Mammary epithelial cell (primary cell): ENCODE measurements at regions of chr3 and their contacts with region 1.

Region 1: GRCh38 chr3:22685597-22685996 is 517.5 kb upstream of the UBE2E2 start:
- DNase-seq: peak; percentile 34
- H3K4me3 ChIP-seq: no peak overlapping the region
- H3K27ac ChIP-seq: no peak overlapping the region
- H3K4me1 ChIP-seq: no peaks in the 10 kb centered on the region
- H3K27me3 ChIP-seq: no peaks in the 10 kb centered on the region
- CTCF ChIP-seq: peak; percentile 61 to 80

Region 2: DNA sequence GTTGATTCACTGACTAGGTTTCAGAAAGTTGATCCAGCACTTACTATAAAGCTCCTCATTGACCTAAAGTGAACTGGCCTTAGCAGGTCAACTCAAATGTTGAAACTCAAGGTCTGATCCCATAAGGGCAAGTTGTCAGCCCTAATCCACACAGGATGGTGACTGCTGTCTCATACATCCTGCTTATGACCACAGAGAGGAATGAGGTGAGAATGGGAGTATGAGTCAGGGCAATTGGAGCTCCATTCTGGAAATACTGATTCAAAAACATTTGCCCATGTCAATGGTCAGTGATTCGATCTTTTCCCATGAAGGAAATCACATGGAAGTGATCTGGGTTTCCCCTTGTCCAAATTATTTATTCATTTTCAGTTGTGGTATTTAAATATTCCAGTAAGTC is 1013.3 kb before region 1 on chr3:
- CTCF ChIA-PET with region 1: no interaction called
- dilution Hi-C with region 1: no loop called
- in situ Hi-C with region 1: no loop called
- intact Hi-C with region 1: no loop called
- DNase-seq: peak; percentile 94
- H3K4me3 ChIP-seq: no peak overlapping the region
- H3K27ac ChIP-seq: peak overlapping the region; percentile 69
- H3K4me1 ChIP-seq: peaks cover 10% of the 10 kb centered on the region
- H3K27me3 ChIP-seq: no peaks in the 10 kb centered on the region
- CTCF ChIP-seq: no peak

Region 3: DNA sequence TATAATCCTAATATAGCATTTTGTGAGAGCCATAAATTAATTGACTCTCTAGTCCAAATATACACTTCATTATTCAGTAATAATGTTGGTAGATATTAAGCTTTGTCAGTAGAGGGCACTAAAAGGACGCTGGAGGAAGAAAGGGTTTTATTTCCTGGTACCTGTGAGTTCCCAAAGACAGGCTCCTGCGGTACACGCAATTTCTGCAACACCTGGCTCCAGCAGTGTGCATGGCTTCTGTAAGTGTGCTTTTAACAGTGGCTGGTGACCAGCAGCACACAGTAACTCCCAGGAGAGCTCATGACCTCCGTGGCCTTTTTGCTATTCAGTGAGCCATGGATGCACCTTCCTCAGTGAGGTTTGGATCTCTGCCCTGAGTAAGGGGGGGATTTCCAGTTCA is 596.3 kb before region 1 on chr3:
- CTCF ChIA-PET with region 1: no interaction called
- dilution Hi-C with region 1: no loop called
- in situ Hi-C with region 1: no loop called
- intact Hi-C with region 1: loop called (anchors 10 kb)
- DNase-seq: peak; percentile 32
- H3K4me3 ChIP-seq: no peak overlapping the region
- H3K27ac ChIP-seq: no peak overlapping the region
- H3K4me1 ChIP-seq: no peaks in the 10 kb centered on the region
- H3K27me3 ChIP-seq: no peaks in the 10 kb centered on the region
- CTCF ChIP-seq: peak; percentile 58 to 63

Region 4: GRCh38 chr3:22175947-22176346 is 509.6 kb before region 1 on chr3:
- CTCF ChIA-PET with region 1: no interaction called
- dilution Hi-C with region 1: no loop called
- in situ Hi-C with region 1: no loop called
- intact Hi-C with region 1: loop called (anchors 1 kb)
- DNase-seq: no peak
- H3K4me3 ChIP-seq: no peak overlapping the region
- H3K27ac ChIP-seq: no peak overlapping the region
- H3K4me1 ChIP-seq: no peaks in the 10 kb centered on the region
- H3K27me3 ChIP-seq: no peaks in the 10 kb centered on the region
- CTCF ChIP-seq: no peak

Region 5: DNA sequence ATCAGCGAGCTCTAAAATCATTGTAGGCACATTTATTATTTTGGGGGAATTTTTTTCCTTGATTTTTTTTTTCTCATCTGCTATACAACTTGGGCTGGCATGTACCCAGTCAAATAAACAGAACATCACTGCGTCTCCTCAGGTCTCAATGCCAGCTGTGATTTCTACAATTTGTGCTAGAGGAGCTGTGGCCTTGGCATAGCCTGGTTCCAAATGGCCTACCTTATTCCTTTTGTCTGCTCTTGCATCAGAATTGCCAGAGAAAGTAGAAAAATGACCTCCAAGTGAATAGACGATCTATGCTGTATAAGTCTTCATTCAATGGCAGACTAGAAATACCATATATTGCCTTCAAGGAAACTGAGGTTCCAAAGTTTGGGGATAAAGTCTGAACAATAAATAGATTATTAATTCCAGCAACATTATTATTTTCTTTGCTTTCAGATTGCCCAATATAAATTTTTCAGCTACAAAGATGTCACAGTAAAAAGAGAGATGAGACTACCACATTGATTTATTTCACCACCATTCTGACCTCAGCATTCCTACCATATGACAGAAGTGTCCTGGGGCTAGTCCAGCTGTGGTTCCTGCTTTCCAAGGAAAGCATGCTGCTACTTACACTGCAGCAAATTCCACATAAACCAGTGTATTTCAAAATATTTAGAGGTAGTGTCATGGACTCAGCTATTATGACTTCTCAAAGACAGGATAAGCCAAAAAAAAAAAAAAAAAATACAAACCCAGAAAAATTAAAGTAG is 440.7 kb before region 1 on chr3:
- CTCF ChIA-PET with region 1: no interaction called
- dilution Hi-C with region 1: no loop called
- in situ Hi-C with region 1: no loop called
- intact Hi-C with region 1: loop called (anchors 10 kb)
- DNase-seq: peak; percentile 84
- H3K4me3 ChIP-seq: no peak overlapping the region
- H3K27ac ChIP-seq: peak overlapping the region; percentile 32
- H3K4me1 ChIP-seq: peaks cover 16% of the 10 kb centered on the region
- H3K27me3 ChIP-seq: no peaks in the 10 kb centered on the region
- CTCF ChIP-seq: no peak

Region 6: GRCh38 chr3:22269831-22270230 is 415.8 kb before region 1 on chr3:
- CTCF ChIA-PET with region 1: no interaction called
- dilution Hi-C with region 1: no loop called
- in situ Hi-C with region 1: no loop called
- intact Hi-C with region 1: no loop called
- DNase-seq: peak; percentile 9
- H3K4me3 ChIP-seq: no peak overlapping the region
- H3K27ac ChIP-seq: no peak overlapping the region
- H3K4me1 ChIP-seq: no peaks in the 10 kb centered on the region
- H3K27me3 ChIP-seq: peaks cover 2% of the 10 kb centered on the region
- CTCF ChIP-seq: no peak